ENCODE measurements at regions of chr10 and their contacts with region 1.

Region 1: GRCh38 chr10:92290837-92291615 is at the starts of genes CPEB3 and MARCHF5:
- DNase-seq: peak; percentile 96
- CTCF ChIP-seq: peak; percentile 28

Region 2: GRCh38 chr10:92087750-92088395 is 203.2 kb before region 1 on chr10:
- CTCF ChIA-PET with region 1: interaction called, 51 read pairs
- POLR2A ChIA-PET with region 1: no interaction called
- DNase-seq: peak; percentile 70
- CTCF ChIP-seq: peak; percentile 77

Region 3: GRCh38 chr10:92103376-92104090 is 187.5 kb before region 1 on chr10:
- CTCF ChIA-PET with region 1: interaction called, 15 read pairs
- POLR2A ChIA-PET with region 1: no interaction called
- DNase-seq: no peak
- CTCF ChIP-seq: no peak

Region 4: DNA sequence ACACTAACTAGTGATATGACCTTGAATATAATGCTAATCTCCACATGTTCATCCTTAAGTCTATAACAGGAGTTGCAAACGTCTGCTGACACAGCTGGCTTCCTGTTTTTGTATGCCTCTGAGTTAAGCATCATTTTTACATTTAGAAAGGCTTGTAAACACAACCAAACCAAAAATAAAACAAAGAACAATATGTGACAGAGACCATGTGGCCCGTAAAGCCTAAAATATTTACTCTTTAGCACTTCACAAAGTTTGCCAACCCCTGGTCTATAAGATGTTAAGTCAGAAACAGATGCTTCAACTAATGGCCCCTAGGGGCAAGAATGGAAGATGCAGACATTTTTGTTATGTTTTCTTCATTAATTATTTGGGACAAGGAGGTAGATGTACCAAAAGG is 109.5 kb before region 1 on chr10:
- CTCF ChIA-PET with region 1: no interaction called
- POLR2A ChIA-PET with region 1: no interaction called
- DNase-seq: no peak
- CTCF ChIP-seq: no peak

Region 5: DNA sequence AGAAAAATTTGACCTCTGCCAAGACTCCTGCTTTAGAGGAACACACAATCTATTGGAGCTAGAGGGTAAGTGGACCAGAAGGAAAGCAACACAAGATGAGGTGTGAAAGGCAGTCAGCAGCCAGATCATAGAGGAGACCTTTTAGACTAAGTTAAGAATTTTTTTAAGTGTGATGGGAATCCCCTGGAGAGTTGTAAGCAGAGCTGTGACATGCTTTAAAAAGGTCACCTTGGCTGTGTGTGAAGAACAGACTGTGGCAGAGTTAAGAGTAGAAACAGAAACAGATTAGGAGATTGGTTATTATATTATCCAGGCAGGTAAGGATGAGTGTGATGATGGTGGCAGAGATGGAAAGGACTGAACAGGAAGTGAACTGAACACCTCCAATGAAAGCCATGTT is 23.7 kb before region 1 on chr10:
- CTCF ChIA-PET with region 1: interaction called, 12 read pairs
- POLR2A ChIA-PET with region 1: no interaction called
- DNase-seq: peak; percentile 40
- CTCF ChIP-seq: no peak

Region 6: GRCh38 chr10:92303096-92303495 is 12.1 kb after region 1 on chr10:
- CTCF ChIA-PET with region 1: interaction called, 19 read pairs
- POLR2A ChIA-PET with region 1: interaction called, 4 read pairs
- DNase-seq: no peak
- CTCF ChIP-seq: no peak

Region 7: GRCh38 chr10:92309273-92309672 is 18.2 kb after region 1 on chr10:
- CTCF ChIA-PET with region 1: interaction called, 19 read pairs
- POLR2A ChIA-PET with region 1: interaction called, 4 read pairs
- DNase-seq: no peak
- CTCF ChIP-seq: no peak

Region 8: DNA sequence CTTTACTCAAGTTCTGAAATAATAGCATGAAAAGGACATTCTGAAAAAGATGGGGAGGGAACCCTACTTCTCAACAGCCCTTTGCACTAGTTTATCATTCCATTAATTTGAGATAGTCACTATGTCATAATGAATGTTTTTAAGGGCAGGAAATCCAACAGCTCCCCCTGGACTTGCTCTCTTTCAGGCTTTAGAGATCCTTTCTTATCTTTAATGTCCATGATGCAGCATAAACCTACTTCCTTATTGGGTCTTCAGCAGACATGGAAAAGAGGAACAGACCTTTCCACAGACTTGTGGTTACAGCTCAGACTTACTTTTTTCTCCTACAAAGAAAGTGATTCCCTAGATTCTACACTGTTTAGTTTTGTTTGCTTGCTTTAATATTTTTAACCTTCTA is 195.6 kb after region 1 on chr10:
- CTCF ChIA-PET with region 1: no interaction called
- POLR2A ChIA-PET with region 1: no interaction called
- DNase-seq: no peak
- CTCF ChIP-seq: no peak

Measured in GM10248 (cell line).